Astrocyte of the cerebellum (primary cell): ENCODE measurements at regions of chr10 and their contacts with region 1.

Region 1: DNA sequence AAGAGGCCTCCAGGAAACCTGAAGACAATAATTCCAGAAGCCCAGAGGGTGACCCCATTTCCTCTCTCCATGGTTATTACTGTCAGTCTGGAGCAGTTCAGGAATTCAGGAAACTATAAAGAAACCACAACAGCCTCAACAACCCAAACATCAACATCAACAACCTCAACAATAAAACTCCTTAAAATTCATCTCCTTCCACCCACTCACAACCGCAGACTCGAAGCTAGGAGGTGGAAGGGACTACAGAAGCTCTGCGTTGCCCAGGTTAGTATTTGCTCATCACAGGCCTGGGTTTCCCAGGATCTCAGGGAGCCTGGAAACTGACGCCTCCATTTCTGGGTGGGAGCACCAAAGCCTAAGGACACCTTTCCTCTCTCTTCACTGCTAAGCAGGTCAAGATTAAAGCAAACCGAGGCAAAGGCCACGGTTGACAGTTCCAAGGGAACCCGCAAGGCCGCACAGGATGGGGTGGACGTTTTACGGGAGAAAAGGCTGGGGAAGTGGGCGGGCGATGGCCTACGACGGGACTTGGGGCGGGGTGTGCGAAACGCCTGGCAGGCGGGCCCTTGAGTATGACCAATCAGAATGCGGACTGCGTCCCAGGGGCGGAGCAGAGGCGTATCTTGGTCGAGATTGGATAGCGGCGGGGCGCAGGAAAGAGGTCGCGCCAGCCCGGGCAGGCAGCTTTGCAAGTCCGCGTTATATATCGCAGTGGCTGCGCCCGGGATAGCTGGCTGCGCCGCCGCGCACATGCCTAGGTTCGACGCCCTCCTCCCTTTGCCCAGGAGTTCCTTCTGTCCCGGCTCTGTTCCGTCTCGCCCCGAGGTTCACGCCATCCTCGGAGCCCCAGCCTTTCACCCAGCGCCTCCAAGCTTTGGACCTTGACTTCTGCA is at the start of gene ELOVL3:
- DNase-seq: peak; percentile 76
- H3K4me3 ChIP-seq: peak within 1 kb of the TSS; percentile 11
- CTCF ChIP-seq: no peak

Region 2: GRCh38 chr10:102167861-102168260 is 58.0 kb before region 1 on chr10:
- in situ Hi-C with region 1: loop called (anchors 5 kb)
- DNase-seq: no peak
- H3K4me3 ChIP-seq: no peak overlapping the region
- CTCF ChIP-seq: no peak

Region 3: DNA sequence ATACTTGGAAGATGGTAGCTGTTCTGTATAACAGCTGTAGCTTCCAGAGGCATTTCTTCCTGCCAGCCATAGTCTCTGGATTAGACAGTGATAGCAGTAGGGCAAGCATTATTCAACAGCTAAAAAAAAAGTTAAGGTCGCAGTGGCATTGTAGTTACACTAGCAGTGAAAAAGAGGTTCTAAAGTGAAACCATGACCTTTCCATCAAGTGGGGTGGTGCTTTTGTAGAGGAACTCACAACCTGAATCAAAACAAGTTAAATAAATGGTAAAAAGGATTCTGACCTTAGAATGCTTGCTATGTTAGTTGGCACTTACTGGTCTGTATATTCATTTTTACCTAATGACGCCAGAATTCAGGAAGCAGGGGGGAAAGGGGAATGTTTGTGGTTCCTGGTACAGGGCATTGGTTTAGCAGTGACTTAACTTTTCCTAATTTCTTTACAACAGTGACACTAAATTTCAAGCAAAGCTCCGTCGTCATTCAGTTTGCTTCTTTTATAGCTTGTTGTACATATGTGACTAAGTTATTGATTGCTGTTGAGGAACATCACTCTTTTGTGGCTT is 74.5 kb after region 1 on chr10:
- in situ Hi-C with region 1: loop called (anchors 10 kb)
- DNase-seq: peak; percentile 74
- H3K4me3 ChIP-seq: no peak overlapping the region
- CTCF ChIP-seq: no peak

Region 4: DNA sequence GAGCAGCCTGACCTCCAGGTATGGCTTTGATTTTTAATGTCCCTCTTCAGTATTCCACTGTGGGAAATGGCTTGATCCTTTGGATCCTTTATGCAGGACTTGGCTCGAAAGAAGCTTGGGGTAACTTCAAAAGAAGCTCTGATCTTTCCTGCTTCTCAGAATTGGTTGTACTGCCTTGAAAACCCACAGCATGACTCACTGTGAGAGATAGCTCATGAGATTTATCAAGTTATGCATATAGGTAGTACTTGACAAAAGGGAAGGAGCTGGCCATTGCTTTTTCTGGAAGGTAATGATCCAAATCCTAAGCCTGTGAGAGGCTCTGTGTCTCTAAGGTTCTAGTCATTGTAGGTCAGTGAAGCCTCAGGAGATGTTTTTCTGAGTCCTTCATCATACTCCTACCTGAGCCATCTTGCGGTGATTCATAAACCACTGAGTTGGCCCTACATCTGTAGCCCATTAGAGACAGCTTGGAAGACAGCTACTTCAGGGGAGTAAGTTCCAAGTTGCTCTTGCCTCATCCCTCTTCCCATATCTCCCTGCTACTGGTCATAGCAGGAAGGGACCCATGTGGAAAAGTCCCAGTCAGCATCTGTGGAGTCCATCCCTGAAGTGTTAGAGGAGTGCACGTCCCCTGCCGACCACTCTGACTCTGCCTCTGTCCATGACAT is 133.0 kb after region 1 on chr10:
- in situ Hi-C with region 1: loop called (anchors 5 kb)
- DNase-seq: no peak
- H3K4me3 ChIP-seq: no peak overlapping the region
- CTCF ChIP-seq: no peak

Region 5: GRCh38 chr10:102503281-102504220 is 277.7 kb after region 1 on chr10 and contains the start of gene SUFU:
- in situ Hi-C with region 1: loop called (anchors 10 kb)
- DNase-seq: peak; percentile 98
- H3K4me3 ChIP-seq: peak within 1 kb of the TSS; percentile 98
- CTCF ChIP-seq: peak; percentile 93